Upper lobe of right lung (tissue), 1 donor: ENCODE measurements at regions of chr1 and their contacts with region 1.

Region 1: GRCh38 chr1:30779294-30780071 is 21.9 kb upstream of the LAPTM5 start:
- DNase-seq: peak; percentile 92
- ATAC-seq: peak; percentile 88
- H3K4me3 ChIP-seq: no peak overlapping the region
- H3K27ac ChIP-seq: no peak overlapping the region
- H3K4me1 ChIP-seq: peaks cover 11% of the 10 kb centered on the region
- H3K27me3 ChIP-seq: no peaks in the 10 kb centered on the region
- CTCF ChIP-seq: peak; percentile 96

Region 2: DNA sequence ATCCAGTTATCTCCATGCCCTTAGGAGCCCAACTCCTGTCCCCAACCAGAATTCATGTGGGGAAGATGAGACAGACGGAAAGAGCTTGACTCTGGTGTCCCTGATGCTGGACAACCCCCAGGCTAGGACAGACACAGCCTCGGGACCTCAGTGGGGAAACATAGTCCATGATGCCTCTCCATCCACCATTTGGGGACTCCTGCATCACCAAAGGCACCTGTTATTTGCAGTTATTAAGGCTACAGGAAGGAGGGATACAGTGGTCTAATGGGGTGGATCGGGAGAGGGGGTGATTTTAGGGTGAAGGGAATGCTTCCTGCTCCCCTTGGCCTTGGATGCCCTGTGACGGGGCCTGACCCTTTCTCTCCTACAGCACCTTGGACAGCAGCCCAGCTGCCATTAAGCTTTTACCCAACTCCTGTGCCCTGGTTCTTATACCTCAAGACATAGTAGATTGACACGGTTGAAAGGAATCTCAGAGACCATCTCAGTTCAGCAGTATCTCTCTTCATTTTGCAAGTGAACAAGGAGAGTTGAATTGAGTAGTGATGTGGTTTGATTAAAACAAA is 167.7 kb before region 1 on chr1:
- intact Hi-C with region 1: no loop called
- DNase-seq: no peak
- ATAC-seq: no peak
- H3K4me3 ChIP-seq: no peak overlapping the region
- H3K27ac ChIP-seq: no peak overlapping the region
- H3K4me1 ChIP-seq: no peaks in the 10 kb centered on the region
- H3K27me3 ChIP-seq: peaks cover 7% of the 10 kb centered on the region
- CTCF ChIP-seq: no peak

Region 3: GRCh38 chr1:30719406-30720270 is 59.8 kb before region 1 on chr1:
- intact Hi-C with region 1: loop called (anchors 5 kb)
- DNase-seq: no peak
- ATAC-seq: no peak
- H3K4me3 ChIP-seq: peak overlapping the region; percentile 75
- H3K27ac ChIP-seq: peak overlapping the region; percentile 98
- H3K4me1 ChIP-seq: peaks cover 8% of the 10 kb centered on the region
- H3K27me3 ChIP-seq: no peaks in the 10 kb centered on the region
- CTCF ChIP-seq: no peak

Region 4: DNA sequence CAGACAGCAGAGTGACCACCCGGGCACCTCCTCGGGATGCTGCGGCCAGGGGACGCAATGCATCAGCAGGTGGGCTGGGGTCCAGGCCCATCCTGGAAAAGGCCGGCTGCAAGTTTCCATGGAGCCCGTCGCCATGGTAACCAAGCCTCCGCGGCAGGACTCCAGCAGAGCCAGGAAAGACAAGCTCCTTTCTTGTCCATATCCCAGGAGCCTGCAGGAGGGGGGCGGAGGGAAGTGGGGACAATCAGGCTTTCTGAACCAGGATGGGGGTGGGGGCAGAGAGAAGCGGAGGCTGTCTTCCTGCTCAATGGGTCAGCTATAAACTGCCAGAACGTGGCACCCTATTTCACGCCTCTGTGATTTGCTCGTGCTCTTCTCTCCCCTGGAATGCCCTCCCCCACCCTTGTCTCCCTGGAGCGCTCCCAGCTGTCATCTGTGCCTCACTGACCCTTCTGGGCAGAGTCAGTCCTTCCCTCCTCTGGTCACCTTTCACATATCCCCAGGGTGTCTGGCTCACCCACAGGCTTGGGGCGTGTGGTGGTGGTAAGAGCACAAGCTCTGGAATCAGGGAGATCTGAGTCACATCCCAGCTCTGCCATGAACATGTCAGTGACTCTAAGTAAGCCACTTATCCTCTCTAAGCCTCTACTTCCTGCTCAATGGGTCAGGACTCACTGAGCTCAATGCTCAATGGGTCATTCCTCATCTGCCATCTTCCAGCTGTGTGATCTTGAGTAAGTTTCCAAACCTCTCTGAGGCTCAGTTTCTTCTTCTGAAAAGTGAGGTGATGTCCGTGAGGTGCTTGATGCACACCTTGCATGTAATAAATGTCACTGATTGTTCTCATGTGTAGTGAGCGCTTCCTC is 37.0 kb after region 1 on chr1:
- intact Hi-C with region 1: no loop called
- DNase-seq: no peak
- ATAC-seq: peak; percentile 19
- H3K4me3 ChIP-seq: no peak overlapping the region
- H3K27ac ChIP-seq: no peak overlapping the region
- H3K4me1 ChIP-seq: no peaks in the 10 kb centered on the region
- H3K27me3 ChIP-seq: peaks cover 11% of the 10 kb centered on the region
- CTCF ChIP-seq: no peak